Posterior vena cava (tissue), 2 donors: ENCODE measurements at regions of chr4 and their contacts with region 1.

Region 1: GRCh38 chr4:3629665-3630064 is 97.4 kb upstream of the LRPAP1 start:
- DNase-seq: peak; percentile 49

Region 2: DNA sequence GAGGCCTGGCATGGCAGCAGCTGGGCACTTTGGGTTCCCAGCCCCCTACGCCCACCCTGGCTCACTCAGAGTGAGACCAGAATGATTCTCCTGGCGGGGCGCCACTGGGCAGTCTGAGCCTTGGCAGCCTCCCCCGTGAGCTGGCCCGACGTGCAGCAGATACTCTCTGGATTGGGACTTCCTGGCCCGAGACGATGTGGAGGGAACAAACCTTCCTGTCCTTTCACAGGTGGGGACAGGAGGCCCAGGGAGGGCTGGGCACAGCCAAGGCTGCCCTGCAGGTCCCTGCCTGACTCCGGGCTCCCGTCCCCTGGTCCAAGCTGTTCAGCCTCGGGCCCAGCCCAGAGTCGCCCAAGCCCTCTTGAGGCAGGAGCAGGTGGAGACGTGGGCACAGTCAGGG is 803.9 kb before region 1 on chr4:
- intact Hi-C with region 1: loop called in 1 of 2 experiments (anchors 5 kb)
- DNase-seq: peak; percentile 81

Region 3: DNA sequence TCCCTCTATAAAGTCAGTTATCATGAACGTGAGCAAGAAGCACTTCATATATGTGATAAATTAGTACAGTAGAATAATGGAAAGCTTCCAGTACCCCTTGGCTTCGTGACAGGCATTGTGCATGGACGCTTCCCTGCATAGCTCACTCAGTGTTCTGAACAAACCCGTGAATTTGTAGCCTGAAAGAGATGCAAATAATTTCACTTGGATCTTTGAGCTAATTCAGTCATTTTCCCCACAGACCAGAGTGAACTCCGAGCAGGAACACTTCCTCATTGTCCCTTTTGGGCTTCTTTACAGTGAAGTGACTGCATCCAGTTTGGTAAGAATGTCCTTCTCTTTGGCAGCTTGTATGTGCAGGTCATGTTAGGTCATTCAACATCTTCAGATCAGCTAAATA is 735.9 kb before region 1 on chr4:
- intact Hi-C with region 1: no loop called
- DNase-seq: no peak

Region 4: DNA sequence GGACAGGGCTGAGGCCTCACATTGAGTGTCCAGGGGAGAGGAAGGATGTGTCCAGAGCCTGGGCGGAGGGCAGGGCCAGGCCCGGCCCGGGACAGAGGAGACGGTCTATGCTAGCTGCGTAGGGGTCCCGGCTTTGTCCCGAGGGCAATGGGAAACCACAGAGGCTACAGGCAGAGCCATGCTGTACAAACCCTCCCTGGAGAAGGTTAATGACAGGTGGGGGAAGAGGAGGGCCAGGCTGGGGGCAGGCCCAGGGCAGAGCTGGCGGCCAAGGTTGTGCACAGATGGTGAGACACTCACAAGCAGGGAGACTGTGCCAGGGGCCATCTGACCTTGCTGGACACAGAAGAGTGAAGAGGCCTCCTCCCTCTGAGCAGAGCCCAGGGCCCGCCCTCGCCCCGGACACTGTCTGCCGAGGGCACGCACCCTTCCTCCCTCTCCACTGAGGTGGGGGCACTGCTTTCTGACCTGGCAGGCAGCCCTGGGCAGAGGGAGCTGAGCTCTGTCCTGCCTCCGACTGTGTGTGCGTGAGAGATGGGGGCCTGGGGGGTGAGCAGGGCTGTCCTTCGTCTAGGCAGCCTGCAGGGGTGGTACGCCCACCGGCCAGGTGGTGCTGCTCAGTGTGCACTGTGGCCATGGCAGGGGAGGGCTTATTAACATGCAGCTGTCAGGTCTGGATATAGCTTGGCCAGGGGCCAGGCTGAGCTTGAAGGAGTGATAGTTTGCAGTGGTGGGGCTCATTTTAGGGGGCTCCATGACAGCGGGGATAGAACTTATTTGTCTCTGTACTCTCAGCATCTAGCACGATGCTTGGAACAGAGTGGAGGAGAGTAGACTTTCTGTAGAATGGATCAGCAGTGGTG is 21.7 kb before region 1 on chr4:
- intact Hi-C with region 1: no loop called
- DNase-seq: no peak